Activated B cell treated with CpG ODN at 0.5 μM for 24 hours (primary cell): ENCODE measurements at regions of chr3 and their contacts with region 1.

Region 1: DNA sequence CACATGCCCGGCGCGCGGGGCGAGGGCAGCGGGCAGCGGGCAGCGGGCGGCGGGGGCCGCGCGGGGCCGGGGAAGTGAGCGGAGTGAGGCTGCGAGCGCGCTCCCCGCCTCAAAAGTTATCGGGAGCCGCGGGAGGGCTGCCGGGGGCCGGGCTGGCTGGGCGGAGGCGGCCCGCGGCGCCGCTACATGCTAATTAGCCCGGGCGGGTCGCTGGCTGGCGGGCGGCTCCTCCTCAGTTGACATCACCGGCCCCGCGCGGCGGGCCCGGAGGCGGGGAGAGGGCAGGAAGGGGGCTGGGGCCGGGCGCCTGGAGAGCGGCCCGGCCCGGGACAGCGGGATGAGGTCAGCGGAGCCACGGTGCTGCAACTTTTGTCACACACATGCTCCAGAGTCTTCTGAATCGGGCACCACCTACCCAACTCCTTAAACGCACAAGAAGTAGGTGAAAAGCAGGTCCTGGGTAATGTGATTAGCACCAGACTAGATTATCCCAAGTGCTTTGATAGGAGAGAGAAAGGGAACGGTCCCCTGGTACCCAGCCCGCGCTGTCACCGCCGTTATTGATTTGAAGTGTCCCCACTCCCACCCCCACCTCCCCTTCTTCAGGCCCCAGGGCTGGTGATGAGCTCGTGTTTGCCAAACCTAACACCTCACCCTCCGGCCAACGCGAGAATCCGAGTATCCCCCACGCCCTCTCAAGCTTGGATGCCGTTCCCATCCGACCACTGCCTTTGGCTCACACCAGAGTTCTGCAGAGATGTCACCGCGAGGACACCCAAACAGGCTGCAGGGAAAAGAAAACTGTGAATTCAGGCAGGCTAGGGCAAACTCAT is at the start of gene HEG1:
- DNase-seq: peak; percentile 66
- ATAC-seq: peak; percentile 78
- H3K4me3 Mint-ChIP-seq: peak within 1 kb of the TSS; percentile 86
- H3K27ac Mint-ChIP-seq: peak within 1 kb of the TSS; percentile 68
- H3K4me1 Mint-ChIP-seq: peaks cover 39% of the 10 kb centered on the region
- H3K27me3 Mint-ChIP-seq: peaks cover 6% of the 10 kb centered on the region
- CTCF ChIP-seq: no peak
- total RNA-seq, gene HEG1: 6.1 and 7.2 TPM in 2 replicates

Region 2: GRCh38 chr3:125024817-125025216 is 31.3 kb before region 1 on chr3:
- CTCF ChIA-PET with region 1: no interaction called
- POLR2A ChIA-PET with region 1: no interaction called
- intact Hi-C with region 1: no loop called
- DNase-seq: no peak
- ATAC-seq: no peak
- H3K4me3 Mint-ChIP-seq: no peak overlapping the region
- H3K27ac Mint-ChIP-seq: no peak overlapping the region
- H3K4me1 Mint-ChIP-seq: peaks cover 10% of the 10 kb centered on the region
- H3K27me3 Mint-ChIP-seq: no peaks in the 10 kb centered on the region
- CTCF ChIP-seq: no peak

Region 3: DNA sequence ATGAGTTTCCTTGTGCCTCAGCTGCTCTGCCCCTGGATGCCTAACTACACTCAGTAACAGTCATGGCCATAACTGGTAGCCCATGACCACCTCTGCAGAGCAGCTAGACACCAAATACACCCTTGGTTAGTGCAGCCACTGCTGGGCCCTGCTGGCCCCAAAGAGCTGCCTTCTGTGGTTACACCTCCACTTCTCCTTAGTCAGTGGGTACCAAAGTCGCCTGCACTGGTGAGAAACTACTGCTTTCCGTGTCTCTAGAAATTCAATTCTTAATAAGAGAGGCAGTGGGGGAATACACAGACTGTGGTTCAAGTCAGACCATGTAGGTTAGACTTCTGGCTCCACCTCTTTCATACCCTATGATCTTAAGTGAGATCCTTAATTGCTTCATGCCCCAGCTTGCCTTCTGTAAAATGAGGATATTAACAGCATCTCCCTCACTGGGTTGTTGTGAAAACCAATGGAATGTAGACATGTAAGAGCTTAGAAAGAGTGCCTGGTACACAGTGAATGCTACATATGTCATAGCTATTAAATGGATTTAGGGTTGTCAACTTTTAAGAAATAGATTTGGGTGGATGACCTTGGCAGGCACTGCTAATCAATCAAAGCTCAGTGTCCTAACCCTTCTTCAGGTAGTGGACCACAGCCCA is 18.5 kb before region 1 on chr3:
- CTCF ChIA-PET with region 1: no interaction called
- POLR2A ChIA-PET with region 1: interaction called, 4 read pairs
- intact Hi-C with region 1: loop called (anchors 2 kb)
- DNase-seq: no peak
- ATAC-seq: no peak
- H3K4me3 Mint-ChIP-seq: no peak overlapping the region
- H3K27ac Mint-ChIP-seq: no peak overlapping the region
- H3K4me1 Mint-ChIP-seq: peaks cover 2% of the 10 kb centered on the region
- H3K27me3 Mint-ChIP-seq: no peaks in the 10 kb centered on the region
- CTCF ChIP-seq: no peak

Region 4: GRCh38 chr3:125107861-125108567 is 51.9 kb after region 1 on chr3:
- CTCF ChIA-PET with region 1: no interaction called
- POLR2A ChIA-PET with region 1: no interaction called
- intact Hi-C with region 1: loop called (anchors 5 kb)
- DNase-seq: no peak
- ATAC-seq: peak; percentile 79
- H3K4me3 Mint-ChIP-seq: peak overlapping the region; percentile 4
- H3K27ac Mint-ChIP-seq: peak overlapping the region; percentile 8
- H3K4me1 Mint-ChIP-seq: peaks cover 31% of the 10 kb centered on the region
- H3K27me3 Mint-ChIP-seq: no peaks in the 10 kb centered on the region
- CTCF ChIP-seq: no peak

Region 5: DNA sequence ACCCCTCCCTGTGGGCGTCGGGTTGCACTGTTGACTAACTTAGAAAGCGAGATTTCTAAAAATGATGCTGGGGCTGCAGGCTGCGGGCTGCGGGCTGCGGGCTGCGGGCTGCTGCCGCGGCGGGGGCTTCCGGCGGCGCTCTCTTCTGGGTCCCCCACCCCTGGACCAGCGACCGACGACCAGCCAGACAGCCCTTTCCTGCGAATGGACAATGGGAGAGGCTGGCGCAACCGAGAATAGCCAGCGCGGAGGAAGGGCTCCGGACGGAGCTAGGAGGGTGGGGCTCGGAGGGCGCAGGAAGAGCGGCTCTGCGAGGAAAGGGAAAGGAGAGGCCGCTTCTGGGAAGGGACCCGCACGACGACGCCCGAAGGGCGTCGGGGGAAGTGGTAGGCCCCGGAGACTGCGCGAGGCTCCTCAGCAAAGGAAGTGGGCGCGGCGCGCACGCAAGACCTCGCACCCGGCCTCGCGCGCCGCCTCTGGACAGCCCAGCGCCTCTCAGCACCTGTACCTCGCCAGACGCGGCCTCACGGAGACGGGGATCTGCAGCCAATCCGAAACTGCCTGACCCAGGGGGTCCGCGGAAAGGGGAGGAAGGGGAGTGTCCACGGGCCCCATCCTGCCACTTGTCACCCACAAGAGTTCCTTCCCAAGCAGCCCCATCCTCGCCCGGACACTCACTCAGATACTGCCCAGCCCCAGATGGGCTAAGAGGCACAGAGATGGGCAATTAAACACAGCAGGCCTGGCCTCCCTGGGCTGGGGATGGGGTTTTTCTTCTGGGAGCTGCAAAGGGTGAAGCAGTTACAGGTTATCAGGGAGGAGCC is 85.7 kb after region 1 on chr3:
- CTCF ChIA-PET with region 1: no interaction called
- POLR2A ChIA-PET with region 1: no interaction called
- intact Hi-C with region 1: loop called (anchors 2 kb)
- DNase-seq: peak; percentile 44
- ATAC-seq: peak; percentile 88
- H3K4me3 Mint-ChIP-seq: peak overlapping the region; percentile 82
- H3K27ac Mint-ChIP-seq: peak overlapping the region; percentile 79
- H3K4me1 Mint-ChIP-seq: peaks cover 66% of the 10 kb centered on the region
- H3K27me3 Mint-ChIP-seq: no peaks in the 10 kb centered on the region
- CTCF ChIP-seq: no peak

Region 6: DNA sequence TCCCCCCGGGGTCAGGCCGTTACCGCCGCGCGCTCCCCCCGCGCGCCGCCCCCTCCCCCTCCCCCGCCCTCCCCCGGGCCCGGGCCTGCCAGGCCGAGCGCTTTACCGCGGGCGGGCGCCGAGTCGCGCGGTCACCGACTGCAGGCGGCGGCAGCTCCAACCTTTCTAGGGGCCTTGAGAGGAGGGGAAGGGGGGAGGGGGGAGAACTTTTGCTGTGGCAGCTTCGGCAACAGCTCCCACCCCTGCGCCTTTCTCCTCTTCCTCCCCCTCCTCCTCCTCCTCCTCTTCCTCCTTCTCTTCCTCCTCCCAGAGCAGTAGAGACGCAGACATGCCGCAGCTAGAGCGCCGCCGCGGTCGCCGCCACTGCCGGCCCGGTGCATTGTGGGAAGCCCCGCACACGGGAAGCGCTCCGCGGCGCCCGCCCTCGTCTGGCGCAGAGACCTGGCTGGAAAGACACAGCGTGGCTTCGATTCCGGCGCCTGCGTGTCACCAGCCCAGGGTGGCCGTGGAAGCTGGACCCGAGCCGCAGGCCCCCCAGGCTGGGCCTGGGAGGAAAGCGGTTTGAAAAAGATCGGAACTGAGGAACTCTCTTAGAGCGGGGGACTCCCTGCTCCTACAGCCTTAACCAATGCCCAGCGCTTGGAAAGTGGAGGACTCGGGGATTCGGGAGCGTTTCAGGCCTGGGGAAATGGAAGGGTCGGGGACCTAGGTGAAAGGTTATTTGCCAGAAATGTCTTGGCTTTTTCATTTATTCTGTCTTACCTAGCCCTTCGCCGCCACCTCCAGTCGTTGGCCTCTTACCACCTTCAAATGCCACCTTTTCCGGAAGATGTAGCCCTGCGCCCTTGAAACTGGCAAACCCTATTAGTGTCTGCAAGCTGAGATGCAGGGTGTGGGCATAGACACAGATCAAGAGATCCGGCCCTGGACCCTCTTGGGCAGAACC is 319.1 kb after region 1 on chr3 and contains the start of gene ZNF148:
- CTCF ChIA-PET with region 1: no interaction called
- POLR2A ChIA-PET with region 1: interaction called, 3 read pairs
- intact Hi-C with region 1: loop called (anchors 1 kb)
- DNase-seq: peak; percentile 92
- ATAC-seq: peak; percentile 92
- H3K4me3 Mint-ChIP-seq: peak within 1 kb of the TSS; percentile 96
- H3K27ac Mint-ChIP-seq: peak within 1 kb of the TSS; percentile 92
- H3K4me1 Mint-ChIP-seq: peaks cover 39% of the 10 kb centered on the region
- H3K27me3 Mint-ChIP-seq: no peaks in the 10 kb centered on the region
- CTCF ChIP-seq: no peak
- total RNA-seq, gene ZNF148: 46.6 and 57.6 TPM in 2 replicates